Ovary (tissue), 10 donors: ENCODE measurements at regions of chr18 and their contacts with region 1.

Region 1: GRCh38 chr18:3983351-3983969 is 471.6 kb downstream of the DLGAP1 start:
- DNase-seq: no peak
- H3K4me3 ChIP-seq: no peak overlapping the region
- H3K27ac ChIP-seq: no peak overlapping the region
- H3K4me1 ChIP-seq: no peaks in the 10 kb centered on the region
- H3K27me3 ChIP-seq: no peaks in the 10 kb centered on the region
- CTCF ChIP-seq: no peak
- EP300 ChIP-seq: no peak
- POLR2A ChIP-seq: no peak

Region 2: DNA sequence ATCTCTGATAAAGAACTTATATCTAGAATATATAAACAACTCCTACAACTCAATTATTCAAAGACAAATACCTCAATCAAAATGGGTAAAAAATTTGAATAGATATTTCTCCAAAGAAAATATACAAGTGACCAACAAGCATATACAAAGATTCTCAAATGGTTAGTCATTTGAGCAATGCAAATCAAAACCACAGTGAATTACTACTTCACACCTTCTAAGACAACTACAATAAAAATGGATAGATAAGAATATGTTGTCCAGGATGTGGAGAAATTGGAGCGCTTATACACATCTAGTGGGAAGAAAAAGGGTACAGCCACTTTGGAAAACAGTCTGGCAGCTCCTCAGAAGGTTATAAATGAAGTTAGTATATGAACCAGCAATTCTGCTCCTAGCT is 200.6 kb before region 1 on chr18:
- intact Hi-C with region 1: loop called in 1 of 4 experiments (anchors 10 kb)
- DNase-seq: no peak
- H3K4me3 ChIP-seq: no peak overlapping the region
- H3K27ac ChIP-seq: no peak overlapping the region
- H3K4me1 ChIP-seq: no peaks in the 10 kb centered on the region
- H3K27me3 ChIP-seq: no peaks in the 10 kb centered on the region
- CTCF ChIP-seq: no peak
- EP300 ChIP-seq: no peak
- POLR2A ChIP-seq: no peak

Region 3: GRCh38 chr18:3966985-3967856 is 16.2 kb before region 1 on chr18:
- intact Hi-C with region 1: loop called in 1 of 4 experiments (anchors 1 kb)
- DNase-seq: no peak
- H3K4me3 ChIP-seq: no peak overlapping the region
- H3K27ac ChIP-seq: no peak overlapping the region
- H3K4me1 ChIP-seq: no peaks in the 10 kb centered on the region
- H3K27me3 ChIP-seq: no peaks in the 10 kb centered on the region
- CTCF ChIP-seq: no peak
- EP300 ChIP-seq: no peak
- POLR2A ChIP-seq: no peak

Region 4: DNA sequence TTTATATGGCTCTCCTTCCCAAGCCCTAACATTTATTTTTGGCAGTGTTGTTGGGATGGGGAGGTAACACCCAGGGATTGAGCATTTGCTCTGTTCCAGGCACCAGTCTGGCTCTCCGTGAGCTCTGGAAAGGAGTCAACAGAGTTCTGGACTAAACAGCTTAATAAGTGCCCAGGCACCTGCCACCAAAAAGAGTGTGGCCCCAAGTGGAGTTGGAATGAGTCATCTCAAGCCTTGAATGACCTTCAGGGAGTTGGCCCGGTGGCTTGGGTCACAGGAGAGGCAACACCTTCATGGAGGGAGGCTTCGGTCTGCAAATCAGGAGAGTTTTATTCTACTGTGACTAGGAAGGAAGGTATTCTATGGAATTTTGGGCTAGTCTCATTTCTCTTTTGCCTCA is 268.4 kb after region 1 on chr18:
- intact Hi-C with region 1: no loop called
- DNase-seq: no peak
- H3K4me3 ChIP-seq: no peak overlapping the region
- H3K27ac ChIP-seq: no peak overlapping the region
- H3K4me1 ChIP-seq: no peaks in the 10 kb centered on the region
- H3K27me3 ChIP-seq: no peaks in the 10 kb centered on the region
- CTCF ChIP-seq: no peak
- EP300 ChIP-seq: no peak
- POLR2A ChIP-seq: no peak